MCF 10A (cell line): ENCODE measurements at regions of chr6 and their contacts with region 1.

Region 1: GRCh38 chr6:11207199-11207968 is 25.1 kb downstream of the NEDD9 start:
- DNase-seq: peak; percentile 96
- H3K4me3 Mint-ChIP-seq: peak overlapping the region; percentile 44
- H3K27ac Mint-ChIP-seq: peak overlapping the region; percentile 92
- H3K4me1 Mint-ChIP-seq: peaks cover 18% of the 10 kb centered on the region
- H3K27me3 Mint-ChIP-seq: no peaks in the 10 kb centered on the region
- CTCF ChIP-seq: no peak

Region 2: DNA sequence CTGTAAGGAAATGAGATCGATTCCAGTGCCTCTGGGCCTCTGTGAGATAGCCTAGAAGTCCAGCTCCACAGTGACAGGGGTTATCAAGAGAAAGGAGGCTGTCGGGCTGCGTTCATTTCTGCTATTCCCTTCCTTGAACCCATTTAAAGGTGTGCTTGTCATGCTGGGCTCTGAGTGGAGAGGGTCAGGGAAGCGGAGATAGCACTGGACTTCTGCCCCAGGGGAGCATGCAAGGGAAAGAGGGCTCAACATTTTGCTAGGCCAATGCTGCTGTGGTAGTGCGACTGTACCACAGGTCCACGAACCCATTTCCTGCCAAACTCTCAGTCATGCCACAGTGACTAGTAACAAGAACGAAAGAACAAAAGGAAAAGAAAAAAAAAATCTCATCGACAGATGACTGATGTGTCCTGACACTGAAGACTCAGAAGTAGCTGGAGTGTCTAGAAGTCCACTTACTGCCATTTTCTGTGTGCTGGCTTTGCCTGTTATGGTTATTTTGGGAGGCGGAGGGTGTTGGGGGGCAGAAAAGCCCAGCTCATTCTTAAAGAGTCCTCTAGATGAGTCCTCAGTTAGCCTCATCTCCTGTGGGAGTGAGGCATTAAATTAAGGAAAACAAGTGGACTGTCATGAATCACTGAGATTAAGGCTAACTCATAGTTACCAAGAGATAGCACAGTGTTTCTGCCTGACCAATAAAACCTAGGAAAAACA is 17.0 kb after region 1 on chr6:
- CTCF ChIA-PET with region 1: interaction called, 4 read pairs
- POLR2A ChIA-PET with region 1: interaction called, 16 read pairs
- intact Hi-C with region 1: no loop called
- DNase-seq: no peak
- H3K4me3 Mint-ChIP-seq: no peak overlapping the region
- H3K27ac Mint-ChIP-seq: no peak overlapping the region
- H3K4me1 Mint-ChIP-seq: peaks cover 41% of the 10 kb centered on the region
- H3K27me3 Mint-ChIP-seq: no peaks in the 10 kb centered on the region
- CTCF ChIP-seq: no peak

Region 3: DNA sequence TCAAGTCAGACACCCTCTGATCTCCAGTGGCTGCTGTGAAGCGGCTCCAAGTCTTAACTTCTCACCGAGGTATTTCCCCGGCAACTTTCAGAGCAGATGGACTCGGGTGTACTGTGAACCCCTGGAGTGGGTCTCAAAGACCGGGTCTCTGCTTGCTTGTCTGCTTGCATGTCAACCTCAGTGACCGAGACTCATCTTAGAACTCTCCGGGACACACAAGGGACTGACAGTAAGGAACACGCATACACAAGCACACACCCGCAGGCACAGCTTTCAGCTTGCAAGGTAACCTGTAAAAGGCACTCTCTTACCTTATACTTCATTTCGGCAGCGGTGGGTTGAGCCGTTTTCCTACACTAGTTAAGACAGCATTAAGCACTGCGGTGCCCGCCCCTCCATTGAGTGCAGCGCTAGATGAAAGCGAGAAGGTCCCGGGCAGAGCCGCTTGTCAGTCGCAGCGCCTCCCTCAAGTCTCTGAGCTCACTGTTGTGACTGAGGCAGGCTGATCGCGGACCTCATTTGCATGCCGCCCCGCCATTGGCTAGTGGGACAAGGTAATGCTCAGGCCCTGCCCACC is 24.9 kb after region 1 on chr6 and contains the start of gene NEDD9:
- CTCF ChIA-PET with region 1: interaction called, 5 read pairs
- POLR2A ChIA-PET with region 1: interaction called, 13 read pairs
- intact Hi-C with region 1: loop called (anchors 1 kb)
- DNase-seq: peak; percentile 97
- H3K4me3 Mint-ChIP-seq: peak within 1 kb of the TSS; percentile 73
- H3K27ac Mint-ChIP-seq: peak within 1 kb of the TSS; percentile 85
- H3K4me1 Mint-ChIP-seq: peaks cover 41% of the 10 kb centered on the region
- H3K27me3 Mint-ChIP-seq: no peaks in the 10 kb centered on the region
- CTCF ChIP-seq: no peak
- total RNA-seq, gene NEDD9: 2.2 and 4.4 TPM in 2 replicates

Region 4: GRCh38 chr6:11317885-11318771 is 110.7 kb after region 1 on chr6:
- CTCF ChIA-PET with region 1: no interaction called
- POLR2A ChIA-PET with region 1: interaction called, 3 read pairs
- intact Hi-C with region 1: loop called (anchors 1 kb)
- DNase-seq: peak; percentile 95
- H3K4me3 Mint-ChIP-seq: no peak overlapping the region
- H3K27ac Mint-ChIP-seq: peak overlapping the region; percentile 4
- H3K4me1 Mint-ChIP-seq: peaks cover 33% of the 10 kb centered on the region
- H3K27me3 Mint-ChIP-seq: no peaks in the 10 kb centered on the region
- CTCF ChIP-seq: no peak

Region 5: GRCh38 chr6:11374036-11375010 is 166.9 kb after region 1 on chr6:
- CTCF ChIA-PET with region 1: no interaction called
- POLR2A ChIA-PET with region 1: no interaction called
- intact Hi-C with region 1: no loop called
- DNase-seq: no peak
- H3K4me3 Mint-ChIP-seq: no peak overlapping the region
- H3K27ac Mint-ChIP-seq: no peak overlapping the region
- H3K4me1 Mint-ChIP-seq: no peaks in the 10 kb centered on the region
- H3K27me3 Mint-ChIP-seq: no peaks in the 10 kb centered on the region
- CTCF ChIP-seq: no peak